ENCODE measurements at regions of chr12 and their contacts with region 1.

Region 1: DNA sequence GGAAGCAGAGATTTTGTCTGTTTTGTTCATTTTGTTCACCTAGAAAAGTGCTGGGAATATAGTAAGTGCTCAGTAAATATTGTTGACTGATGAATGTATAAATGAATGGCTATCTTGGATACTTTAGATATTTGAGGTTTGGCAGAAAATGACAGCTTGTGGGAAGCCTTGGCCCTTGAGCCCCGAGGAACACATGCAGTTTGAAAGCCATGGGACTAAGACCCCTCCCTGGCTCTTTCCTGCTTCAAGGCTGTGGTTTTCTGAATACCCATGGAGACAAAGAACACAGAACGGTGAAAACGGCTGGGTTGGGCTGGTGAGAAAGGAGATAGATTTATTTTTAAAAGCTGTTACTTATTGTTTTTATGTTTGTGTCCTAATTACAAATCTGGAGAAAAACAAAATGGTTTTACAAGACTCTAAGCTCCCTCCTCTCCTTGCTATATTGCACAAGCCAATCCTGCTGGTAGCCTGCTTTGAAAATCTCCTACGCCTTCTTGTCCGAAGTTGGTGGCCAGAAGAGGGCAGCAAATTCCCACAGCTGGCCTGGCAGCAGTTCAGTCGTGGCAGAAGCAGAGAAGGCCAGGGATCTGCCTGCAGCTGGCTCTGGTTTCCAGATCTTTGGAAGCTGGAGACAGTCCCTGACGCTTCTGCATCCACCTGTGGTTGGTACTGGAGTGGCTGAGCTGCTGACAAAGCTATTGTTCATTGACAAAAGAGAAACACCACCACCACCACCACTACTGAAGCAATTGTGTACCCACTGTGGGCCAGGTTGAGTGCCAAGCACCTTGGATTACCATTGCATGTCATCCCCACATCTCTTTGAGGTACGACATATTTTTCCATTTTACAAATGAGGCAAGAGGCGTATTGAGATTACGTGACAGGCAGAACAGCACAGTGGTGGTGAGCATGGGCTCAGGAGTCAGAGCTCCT is 5.2 kb upstream of the KRT85 start:
- DNase-seq: peak; percentile 62 to 98 (median 86)

Region 2: DNA sequence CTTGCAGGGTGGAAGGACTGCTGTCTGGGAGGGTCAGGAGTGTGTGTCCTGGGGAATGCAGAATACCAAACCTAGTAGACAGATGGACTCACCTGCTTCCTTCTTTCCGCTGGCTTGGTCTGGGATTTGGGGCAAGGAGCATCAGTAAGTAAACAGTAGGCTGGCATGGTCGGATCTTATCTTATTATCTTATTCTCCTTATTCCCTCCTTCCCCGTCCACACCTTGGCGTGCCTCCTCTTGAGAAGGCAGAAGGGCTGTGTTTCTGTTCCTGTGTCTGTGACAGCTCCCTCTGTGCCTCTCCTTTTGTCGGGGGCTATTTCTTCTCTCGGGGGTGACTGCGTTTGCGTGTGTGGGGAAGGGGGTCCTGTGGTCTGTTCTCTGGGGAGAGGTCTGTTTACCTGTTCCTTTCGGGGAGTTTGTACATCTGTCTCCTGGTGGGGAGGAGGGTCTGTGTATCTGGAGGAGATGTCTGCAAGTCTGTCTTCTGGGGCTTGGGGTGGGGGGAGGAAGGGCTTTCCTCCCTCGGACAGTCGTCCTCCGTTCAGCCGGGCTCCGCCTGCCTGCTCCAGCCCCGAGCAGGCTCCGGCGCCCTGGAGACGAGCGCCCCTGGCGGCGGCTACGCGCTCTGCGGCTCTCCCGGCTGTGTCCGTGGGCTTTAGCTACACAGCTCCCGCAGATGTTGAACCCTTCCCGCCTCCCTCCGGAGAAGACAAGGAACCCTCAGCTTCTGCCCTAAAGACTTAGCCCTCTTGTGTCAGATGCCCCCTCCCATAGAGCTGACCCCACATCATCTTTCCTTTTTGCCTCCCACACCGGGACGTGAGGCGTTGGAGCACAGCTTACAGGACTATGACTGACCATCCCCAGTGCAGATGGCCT is 93.7 kb before region 1 on chr12:
- intact Hi-C with region 1: no loop called
- DNase-seq: peak; percentile 46 to 97 (median 84)

Region 3: GRCh38 chr12:52506858-52507715 is 134.6 kb after region 1 on chr12:
- intact Hi-C with region 1: loop called (anchors 5 kb)
- DNase-seq: no peak

Region 4: DNA sequence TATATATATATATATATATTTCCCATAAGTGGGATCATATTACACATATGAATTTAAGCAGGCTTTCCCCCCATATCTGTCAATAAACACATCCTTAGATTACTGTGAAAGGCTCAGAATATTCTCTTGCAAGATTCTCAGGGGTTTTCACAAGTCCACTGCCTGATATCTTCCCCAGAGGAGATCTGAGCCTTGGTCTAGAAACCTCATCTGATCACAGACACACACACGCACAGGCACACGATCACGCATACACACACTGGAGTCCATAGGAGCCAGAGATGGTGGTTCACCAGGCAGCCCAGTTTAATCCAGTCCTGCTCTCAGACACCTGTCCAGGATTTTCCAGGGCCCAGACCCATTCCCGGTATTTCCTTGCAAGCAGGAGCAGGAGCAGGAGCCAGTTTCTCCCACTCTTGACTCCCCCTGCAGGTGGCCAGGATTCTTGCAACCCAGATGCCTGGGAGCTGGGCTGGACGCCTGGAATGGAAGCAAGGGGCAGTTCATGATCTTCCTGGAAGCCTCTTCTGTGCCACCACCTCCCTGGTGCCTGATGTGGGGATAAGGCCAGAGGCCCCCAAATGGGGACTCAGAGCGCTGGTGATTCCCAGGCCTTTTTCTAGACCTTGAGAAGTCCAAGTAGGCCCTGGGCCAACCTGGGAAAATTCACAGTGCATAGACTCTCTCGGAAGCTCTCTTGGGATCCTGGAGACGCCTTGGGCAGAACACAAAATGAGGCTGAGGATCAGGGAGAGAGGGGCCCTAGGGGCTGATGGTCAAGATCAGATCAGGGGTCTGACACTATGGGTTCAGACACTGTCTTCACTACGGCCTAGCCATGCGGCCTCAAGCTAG is 492.8 kb after region 1 on chr12:
- intact Hi-C with region 1: loop called (anchors 5 kb)
- DNase-seq: peak; percentile 36 to 94 (median 68)

Region 5: DNA sequence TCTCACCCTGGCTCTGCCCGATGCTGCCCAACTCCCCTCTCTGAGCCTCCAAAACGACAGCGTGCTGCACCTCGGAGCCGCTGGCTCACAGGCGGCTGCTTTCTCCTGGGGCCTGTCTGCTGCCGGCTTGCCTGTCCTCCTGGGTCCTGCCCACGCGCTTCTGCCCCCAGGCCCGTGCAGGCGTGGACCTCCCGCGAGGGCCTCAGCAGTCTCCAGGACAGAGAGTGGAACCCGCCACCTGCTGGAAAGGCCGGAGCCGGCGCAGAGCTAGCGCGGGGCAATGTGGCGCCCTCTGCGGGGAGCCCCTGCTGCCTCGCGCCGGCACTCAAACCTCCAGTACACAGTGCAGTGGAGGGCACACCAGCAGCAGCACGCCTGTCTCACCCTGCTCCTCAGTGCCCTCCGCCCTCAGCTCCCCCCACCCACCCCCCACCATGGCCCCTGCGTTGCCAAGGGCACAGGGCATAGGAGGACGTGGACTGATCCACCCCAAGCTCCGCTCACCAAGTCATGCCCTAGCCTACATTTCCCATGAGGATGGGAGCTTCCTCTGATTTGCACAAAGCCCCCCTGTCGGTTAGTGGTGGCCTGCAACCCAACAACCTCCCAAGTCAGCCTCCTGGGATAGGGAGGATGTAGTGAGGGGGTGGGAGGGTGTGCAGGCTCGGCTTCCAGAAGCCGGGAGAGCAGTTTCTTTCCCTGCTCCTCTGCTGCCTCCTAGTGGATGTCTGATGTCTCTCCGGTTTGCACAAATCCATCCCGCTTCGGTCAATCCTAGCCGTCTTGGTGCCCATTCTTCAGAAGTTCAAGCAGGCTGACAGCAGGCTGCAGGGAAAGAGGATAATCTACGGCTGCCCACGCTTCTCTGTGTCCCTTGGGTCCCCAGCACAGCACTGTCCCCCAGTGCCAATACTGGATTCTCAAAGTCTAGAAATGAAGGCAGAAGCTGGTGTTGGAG is 507.2 kb after region 1 on chr12:
- intact Hi-C with region 1: loop called (anchors 1 kb)
- DNase-seq: peak; percentile 52 to 95 (median 76)

Measured in posterior cingulate gyrus (tissue), 11 donors.